ENCODE measurements at regions of chr13 and their contacts with region 1.

Region 1: DNA sequence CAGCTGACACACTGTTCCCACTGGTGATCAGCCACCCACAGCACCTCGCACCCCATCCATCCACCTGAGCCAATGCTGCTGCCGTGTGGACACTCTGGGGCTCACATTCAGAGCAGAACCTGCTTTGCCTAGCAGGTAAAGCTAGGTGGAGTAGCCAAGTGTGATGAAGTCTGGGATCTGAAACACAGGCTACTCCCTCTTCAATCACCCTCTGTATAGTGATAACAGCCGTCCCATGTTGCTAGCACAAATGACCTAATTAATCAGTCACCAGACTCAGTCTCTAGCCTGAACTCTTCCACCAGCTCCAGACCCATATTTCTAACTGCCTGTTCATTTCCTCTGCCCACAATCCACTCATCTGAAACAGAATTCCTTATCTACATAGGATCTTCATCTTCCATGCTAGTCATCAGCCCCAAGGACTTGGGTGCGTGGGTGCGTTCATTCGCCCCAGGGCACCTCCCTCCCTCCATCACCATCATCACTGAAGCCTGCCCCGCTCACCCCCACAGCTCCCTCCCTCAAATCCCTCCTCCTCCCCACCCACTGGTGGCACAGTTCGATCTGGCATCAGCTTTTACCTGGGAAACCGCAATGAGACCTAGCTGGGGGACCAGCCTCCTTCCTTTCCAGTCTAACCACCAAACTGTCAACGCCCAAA is 19.8 kb downstream of the STK24 start:
- DNase-seq: no peak
- ATAC-seq: no peak
- H3K4me3 ChIP-seq: no peak overlapping the region
- H3K27ac ChIP-seq: no peak overlapping the region
- H3K4me1 ChIP-seq: peaks cover 2% of the 10 kb centered on the region
- H3K27me3 ChIP-seq: no peaks in the 10 kb centered on the region
- CTCF ChIP-seq: no peak

Region 2: GRCh38 chr13:98543378-98544103 is 13.6 kb before region 1 on chr13:
- CTCF ChIA-PET with region 1: interaction called, 10 read pairs
- POLR2A ChIA-PET with region 1: interaction called, 11 read pairs
- in situ Hi-C with region 1: no loop called
- intact Hi-C with region 1: no loop called
- DNase-seq: no peak
- ATAC-seq: no peak
- H3K4me3 ChIP-seq: no peak overlapping the region
- H3K27ac ChIP-seq: no peak overlapping the region
- H3K4me1 ChIP-seq: peaks cover 11% of the 10 kb centered on the region; the same call in 1 of the 2 replicates
- H3K27me3 ChIP-seq: no peaks in the 10 kb centered on the region
- CTCF ChIP-seq: no peak